ENCODE measurements at regions of chr6 and their contacts with region 1.

Region 1: GRCh38 chr6:7249946-7250643 is 62.9 kb downstream of the SSR1 start:
- DNase-seq: no peak
- H3K4me3 ChIP-seq: no peak overlapping the region
- H3K27ac ChIP-seq: no peak overlapping the region
- H3K4me1 ChIP-seq: no peaks in the 10 kb centered on the region; a peak in 1 of 7 replicates
- H3K27me3 ChIP-seq: no peaks in the 10 kb centered on the region
- CTCF ChIP-seq: peak in 2 of 3 experiments; percentile 11 to 24; a peak in 2 of 4 replicates
- EP300 ChIP-seq: no peak
- POLR2A ChIP-seq: no peak
- RAD21 ChIP-seq: no peak

Region 2: GRCh38 chr6:7261032-7261841 is 11.1 kb after region 1 on chr6:
- CTCF ChIA-PET with region 1: interaction called, 55 read pairs
- POLR2A ChIA-PET with region 1: interaction called, 4 read pairs
- DNase-seq: peak; percentile 82 to 90
- H3K4me3 ChIP-seq: peak overlapping the region; percentile 50 to 70 (median 60)
- H3K27ac ChIP-seq: peak overlapping the region; percentile 62; the same call in 1 of the 2 replicates
- H3K4me1 ChIP-seq: peaks cover 0 to 16% (median 11%) of the 10 kb centered on the region in 4 experiments; a peak in 6 of 7 replicates
- H3K27me3 ChIP-seq: no peaks in the 10 kb centered on the region
- CTCF ChIP-seq: no peak
- EP300 ChIP-seq: no peak
- POLR2A ChIP-seq: peak in 1 of 2 experiments; percentile 83; a peak in 2 of 3 replicates
- RAD21 ChIP-seq: peak in 1 of 2 experiments; percentile 20; a peak in 2 of 4 replicates

Measured in H1 (cell line).